Natural killer cell (primary cell): ENCODE measurements at regions of chr10 and their contacts with region 1.

Region 1: DNA sequence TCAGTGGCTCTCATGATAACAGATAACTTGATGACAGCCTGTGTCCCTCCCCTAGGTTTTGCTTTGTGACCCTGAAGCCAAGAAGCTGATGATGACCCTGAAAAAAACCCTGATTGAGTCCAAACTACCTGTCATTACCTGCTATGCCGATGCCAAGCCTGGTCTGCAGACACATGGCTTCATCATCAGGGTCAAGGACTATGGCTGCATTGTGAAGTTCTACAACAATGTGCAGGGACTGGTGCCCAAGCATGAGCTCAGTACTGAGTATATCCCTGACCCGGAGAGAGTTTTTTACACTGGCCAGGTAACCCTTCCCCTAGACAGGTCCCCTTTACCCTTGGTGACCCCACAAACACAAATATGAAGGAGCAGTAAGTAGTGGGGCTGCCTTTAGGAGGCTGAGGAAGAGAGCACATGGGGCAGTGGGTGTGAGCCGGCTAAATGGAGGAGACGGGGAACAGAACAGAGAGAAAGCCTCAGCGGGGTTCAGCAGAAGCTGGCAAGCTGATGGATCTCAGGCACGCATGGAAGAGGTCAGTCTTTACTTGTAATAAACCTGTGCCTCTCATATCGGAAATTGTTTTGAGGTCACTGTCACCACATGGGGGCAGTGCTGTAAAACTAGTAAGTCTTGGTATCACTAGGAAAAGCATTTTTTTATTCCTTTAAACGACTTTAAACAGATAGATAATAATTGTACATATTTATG is 20.2 kb downstream of the PDCD11 start:
- DNase-seq: peak; percentile 50 to 84
- ATAC-seq: peak; percentile 55 to 70 (median 65)
- H3K4me3 ChIP-seq: no peak overlapping the region
- H3K4me3 Mint-ChIP-seq: no peak overlapping the region
- H3K27ac ChIP-seq: no peak overlapping the region
- H3K27ac Mint-ChIP-seq: no peak overlapping the region
- H3K4me1 ChIP-seq: no peaks in the 10 kb centered on the region
- H3K4me1 Mint-ChIP-seq: no peaks in the 10 kb centered on the region
- H3K27me3 ChIP-seq: no peaks in the 10 kb centered on the region
- H3K27me3 Mint-ChIP-seq: no peaks in the 10 kb centered on the region
- CTCF ChIP-seq: peak; percentile 78

Region 2: GRCh38 chr10:103367782-103368518 is 48.6 kb before region 1 on chr10 and contains the start of gene TAF5:
- intact Hi-C with region 1: no loop called
- DNase-seq: peak; percentile 83 to 96
- ATAC-seq: peak; percentile 76 to 91 (median 77)
- H3K4me3 ChIP-seq: peak within 1 kb of the TSS; percentile 67
- H3K4me3 Mint-ChIP-seq: peak within 1 kb of the TSS; percentile 97
- H3K27ac ChIP-seq: peak within 1 kb of the TSS; percentile 69
- H3K27ac Mint-ChIP-seq: peak within 1 kb of the TSS; percentile 89 to 95
- H3K4me1 ChIP-seq: peaks cover 18% of the 10 kb centered on the region
- H3K4me1 Mint-ChIP-seq: peaks cover 19 to 22% of the 10 kb centered on the region in 2 donors
- H3K27me3 ChIP-seq: no peaks in the 10 kb centered on the region
- H3K27me3 Mint-ChIP-seq: no peaks in the 10 kb centered on the region
- CTCF ChIP-seq: no peak
- total RNA-seq, gene TAF5: 3.6 to 8.8 (median 6.3) TPM

Region 3: GRCh38 chr10:103481974-103482531 is 65.5 kb after region 1 on chr10:
- intact Hi-C with region 1: loop called (anchors 1 kb)
- DNase-seq: peak in 1 of 2 donors; percentile 85
- ATAC-seq: peak; percentile 74 to 84 (median 81)
- H3K4me3 ChIP-seq: no peak overlapping the region
- H3K4me3 Mint-ChIP-seq: no peak overlapping the region
- H3K27ac ChIP-seq: no peak overlapping the region
- H3K27ac Mint-ChIP-seq: no peak overlapping the region
- H3K4me1 ChIP-seq: peaks cover 7% of the 10 kb centered on the region
- H3K4me1 Mint-ChIP-seq: peaks cover 7% of the 10 kb centered on the region in 2 donors
- H3K27me3 ChIP-seq: no peaks in the 10 kb centered on the region
- H3K27me3 Mint-ChIP-seq: no peaks in the 10 kb centered on the region
- CTCF ChIP-seq: peak; percentile 75